Motor neuron (in vitro differentiated cells): ENCODE measurements at regions of chr11 and their contacts with region 1.

Region 1: GRCh38 chr11:124070915-124071635 is 29.9 kb upstream of the OR10G7 start:
- ATAC-seq: peak in 7 of 8 experiments; percentile 9 to 54 (median 38)
- H3K4me3 ChIP-seq: no peak overlapping the region
- H3K27ac ChIP-seq: no peak overlapping the region
- H3K4me1 ChIP-seq: no peaks in the 10 kb centered on the region

Region 2: GRCh38 chr11:123956752-123957151 is 114.3 kb before region 1 on chr11:
- in situ Hi-C with region 1: no loop called
- ATAC-seq: no peak
- H3K4me3 ChIP-seq: no peak overlapping the region
- H3K27ac ChIP-seq: no peak overlapping the region
- H3K4me1 ChIP-seq: no peaks in the 10 kb centered on the region

Region 3: DNA sequence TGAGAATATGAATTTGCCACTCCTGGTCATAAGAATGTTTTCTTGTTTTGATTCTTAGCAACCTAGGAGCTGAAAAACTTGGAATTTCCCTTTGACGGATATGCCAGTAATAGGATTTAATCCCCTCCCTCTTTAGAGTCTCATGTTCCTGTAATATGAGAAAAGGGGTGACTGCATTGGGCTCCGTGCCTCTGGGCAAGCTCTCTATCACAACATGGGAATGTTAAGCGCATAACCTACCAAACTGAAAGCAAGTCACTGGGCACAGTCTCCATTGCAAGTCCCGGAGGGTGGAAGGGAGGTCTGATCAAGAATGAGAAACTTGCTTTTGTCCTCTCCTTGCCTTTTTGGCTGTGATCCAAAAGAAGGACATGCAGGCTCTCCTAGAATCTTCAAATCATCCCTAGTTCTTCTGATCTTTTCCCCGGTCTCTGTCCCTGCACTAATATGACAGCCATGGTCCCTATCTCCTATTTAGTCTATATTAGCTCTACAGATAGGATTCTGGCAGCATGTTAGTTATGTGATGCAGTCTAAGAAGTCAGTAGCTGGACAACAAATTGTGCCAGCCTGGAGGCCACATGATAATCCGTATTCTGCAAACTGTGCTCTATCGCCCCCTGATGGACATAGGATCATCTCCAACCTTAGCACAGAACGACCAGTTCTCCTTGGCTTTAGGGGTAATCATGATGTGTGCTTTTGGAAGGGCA is 123.8 kb after region 1 on chr11:
- in situ Hi-C with region 1: loop called in 1 of 9 experiments (anchors 25 kb)
- ATAC-seq: peak in 3 of 8 experiments; percentile 91 to 94 (median 94)
- H3K4me3 ChIP-seq: no peak overlapping the region
- H3K27ac ChIP-seq: no peak overlapping the region
- H3K4me1 ChIP-seq: peaks cover 0 to 6% of the 10 kb centered on the region in 2 donors

Region 4: DNA sequence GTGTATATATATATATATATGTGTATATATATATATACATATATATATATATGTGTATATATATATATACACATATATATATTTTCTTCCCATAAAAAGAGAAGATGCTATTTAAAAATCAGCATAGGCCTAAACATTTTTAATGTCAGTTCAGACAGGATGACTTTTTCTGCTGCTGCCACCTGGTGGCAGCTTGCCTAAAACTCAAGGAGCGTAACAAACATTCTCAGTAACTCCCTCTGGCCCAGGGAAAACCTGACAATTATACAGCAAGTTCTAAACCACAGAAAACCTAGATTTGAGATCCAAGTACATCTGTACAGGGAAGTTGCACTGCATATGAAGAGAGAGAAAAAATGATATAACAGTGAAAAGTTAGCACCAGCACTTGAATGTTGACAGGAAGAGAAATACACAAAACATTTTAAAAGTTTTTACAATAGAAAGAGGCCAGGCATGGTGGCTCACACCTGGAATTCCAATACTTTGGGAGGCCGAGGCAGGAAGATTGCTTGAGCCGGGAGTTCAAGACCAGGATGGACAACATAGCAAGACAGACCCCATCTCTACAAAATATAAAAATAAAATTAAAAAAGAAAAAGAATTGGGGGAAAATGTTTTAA is 515.3 kb after region 1 on chr11:
- in situ Hi-C with region 1: loop called in 4 of 9 experiments (anchors 25 kb)
- ATAC-seq: peak in 5 of 8 experiments; percentile 31 to 67 (median 61)
- H3K4me3 ChIP-seq: no peak overlapping the region
- H3K27ac ChIP-seq: no peak overlapping the region
- H3K4me1 ChIP-seq: no peaks in the 10 kb centered on the region